Endothelial cell of umbilical vein (primary cell): ENCODE measurements at regions of chr6 and their contacts with region 1.

Region 1: GRCh38 chr6:111873178-111874024 is at the start of gene FYN:
- DNase-seq: peak; percentile 99
- H3K4me3 ChIP-seq: peak within 1 kb of the TSS; percentile 76 to 96 (median 85)
- H3K27ac ChIP-seq: peak within 1 kb of the TSS; percentile 59
- H3K4me1 ChIP-seq: peaks cover 30% of the 10 kb centered on the region
- H3K27me3 ChIP-seq: no peaks in the 10 kb centered on the region
- CTCF ChIP-seq: peak in 1 of 2 donors; percentile 53
- POLR2A ChIP-seq: peak; percentile 62
- total RNA-seq, gene FYN: 143 and 151 TPM in 2 replicates

Region 2: DNA sequence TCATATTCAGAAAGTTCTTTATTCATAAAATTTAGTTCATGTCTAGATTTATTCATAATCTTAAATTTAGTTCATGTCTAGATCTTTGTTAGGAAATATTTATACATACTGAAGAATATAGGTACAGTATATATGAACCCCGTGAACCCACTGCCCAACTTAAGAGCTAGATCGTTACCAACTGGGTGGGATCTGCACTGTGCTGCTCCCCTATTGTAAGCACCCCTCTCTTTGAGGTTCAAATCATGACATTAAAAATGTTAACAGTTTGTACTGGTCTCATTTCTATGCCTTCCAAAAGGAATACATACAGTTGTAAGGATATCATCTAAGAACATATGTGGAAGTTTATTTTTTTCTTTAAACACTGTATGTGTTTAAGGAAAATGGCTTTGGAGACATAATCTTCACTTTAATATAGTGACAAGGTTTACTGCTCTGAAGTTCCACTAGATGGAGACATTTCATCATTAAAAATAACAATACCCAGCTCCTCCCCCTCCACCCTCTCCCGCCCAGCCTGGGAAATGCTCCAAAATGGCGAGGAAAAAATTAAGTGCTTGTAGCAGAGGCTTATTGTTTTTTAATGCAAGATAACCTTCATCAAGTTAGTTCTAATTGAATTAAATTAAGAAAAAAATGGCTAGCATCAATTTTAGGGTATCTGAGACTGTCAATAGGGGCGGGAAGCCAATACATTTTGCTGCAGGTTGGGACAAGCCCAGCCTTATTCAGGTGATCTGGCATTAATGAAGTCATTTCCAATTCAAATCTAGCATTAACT is 163.6 kb before region 1 on chr6:
- CTCF ChIA-PET with region 1: interaction called, 7 read pairs
- POLR2A ChIA-PET with region 1: no interaction called
- dilution Hi-C with region 1: no loop called
- intact Hi-C with region 1: loop called (anchors 1 kb)
- DNase-seq: peak; percentile 84
- H3K4me3 ChIP-seq: no peak overlapping the region
- H3K27ac ChIP-seq: peak overlapping the region; percentile 26
- H3K4me1 ChIP-seq: peaks cover 4% of the 10 kb centered on the region
- H3K27me3 ChIP-seq: no peaks in the 10 kb centered on the region
- CTCF ChIP-seq: peak; percentile 36 to 57
- POLR2A ChIP-seq: no peak

Region 3: GRCh38 chr6:111804627-111805235 is 68.7 kb before region 1 on chr6:
- CTCF ChIA-PET with region 1: interaction called, 5 read pairs
- POLR2A ChIA-PET with region 1: no interaction called
- dilution Hi-C with region 1: no loop called
- intact Hi-C with region 1: loop called (anchors 2 kb)
- DNase-seq: peak; percentile 81
- H3K4me3 ChIP-seq: no peak overlapping the region
- H3K27ac ChIP-seq: peak overlapping the region; percentile 56
- H3K4me1 ChIP-seq: peaks cover 39% of the 10 kb centered on the region
- H3K27me3 ChIP-seq: no peaks in the 10 kb centered on the region
- CTCF ChIP-seq: no peak
- POLR2A ChIP-seq: no peak

Region 4: DNA sequence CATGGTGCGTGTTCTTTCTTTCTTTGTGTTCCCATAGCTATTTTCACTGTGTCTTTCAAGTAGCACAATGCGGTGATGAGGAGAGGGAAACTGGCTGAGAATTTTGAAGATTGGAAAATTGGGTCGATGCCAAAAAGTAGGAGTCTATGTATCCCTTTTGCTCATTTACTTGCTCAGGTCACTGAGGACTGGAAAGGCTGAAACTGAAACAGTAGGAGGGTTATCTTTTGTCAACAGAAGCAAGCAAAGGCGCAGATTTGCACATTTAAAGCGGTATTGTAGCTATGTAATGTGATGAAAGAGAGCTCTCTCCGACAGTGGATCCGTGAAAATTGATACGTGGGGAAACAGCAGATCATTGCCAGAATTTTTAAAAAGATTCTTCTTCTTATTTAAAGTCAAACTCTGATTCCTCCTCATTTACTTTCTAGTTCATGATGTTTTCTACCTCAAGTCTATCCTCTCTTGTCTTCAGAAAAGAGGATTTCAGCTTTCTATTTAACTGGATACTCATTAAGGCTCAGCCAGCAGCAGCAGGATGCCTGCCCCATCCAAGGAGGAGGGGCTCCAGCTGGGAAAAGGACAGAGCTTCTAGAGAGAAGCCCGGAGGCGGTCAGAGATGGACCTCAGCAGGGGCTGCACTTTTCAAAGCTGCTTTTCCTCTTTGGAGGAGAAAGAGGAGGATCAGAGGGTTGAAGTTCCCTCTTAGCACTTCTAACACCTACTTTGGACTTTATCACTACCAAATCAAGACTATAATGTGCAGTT is 15.7 kb after region 1 on chr6:
- CTCF ChIA-PET with region 1: interaction called, 12 read pairs
- POLR2A ChIA-PET with region 1: no interaction called
- dilution Hi-C with region 1: no loop called
- intact Hi-C with region 1: loop called (anchors 2 kb)
- DNase-seq: peak; percentile 71
- H3K4me3 ChIP-seq: peak overlapping the region in 1 of 3 experiments; percentile 31
- H3K27ac ChIP-seq: no peak overlapping the region
- H3K4me1 ChIP-seq: peaks cover 24% of the 10 kb centered on the region
- H3K27me3 ChIP-seq: no peaks in the 10 kb centered on the region
- CTCF ChIP-seq: no peak
- POLR2A ChIP-seq: no peak

Region 5: DNA sequence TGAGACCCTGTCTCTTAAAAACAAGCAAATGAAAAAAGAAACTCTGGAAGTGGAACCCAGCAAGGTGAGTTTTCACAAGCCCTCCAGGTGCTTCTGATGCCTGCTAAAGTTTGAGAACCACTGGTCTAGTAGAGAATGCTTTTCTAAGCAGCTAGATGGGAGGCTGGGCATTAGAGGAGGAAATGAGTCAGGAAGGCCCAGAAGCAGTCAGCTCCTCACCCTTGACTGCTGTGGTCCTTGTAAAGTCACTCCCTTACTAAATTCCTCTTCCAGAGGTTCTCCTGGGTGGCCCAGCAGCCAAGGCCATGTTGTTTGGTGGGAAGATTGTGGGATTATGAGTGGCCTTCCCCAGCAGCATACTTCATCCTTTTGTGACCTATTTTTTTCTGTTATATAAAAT is 51.9 kb after region 1 on chr6:
- CTCF ChIA-PET with region 1: interaction called, 3 read pairs
- POLR2A ChIA-PET with region 1: no interaction called
- dilution Hi-C with region 1: no loop called
- intact Hi-C with region 1: loop called (anchors 2 kb)
- DNase-seq: peak; percentile 59
- H3K4me3 ChIP-seq: no peak overlapping the region
- H3K27ac ChIP-seq: no peak overlapping the region
- H3K4me1 ChIP-seq: peaks cover 7% of the 10 kb centered on the region
- H3K27me3 ChIP-seq: no peaks in the 10 kb centered on the region
- CTCF ChIP-seq: no peak
- POLR2A ChIP-seq: no peak

Region 6: GRCh38 chr6:111997078-111997852 is 123.9 kb after region 1 on chr6:
- CTCF ChIA-PET with region 1: interaction called, 4 read pairs
- POLR2A ChIA-PET with region 1: no interaction called
- dilution Hi-C with region 1: no loop called
- intact Hi-C with region 1: loop called (anchors 1 kb)
- DNase-seq: peak; percentile 74
- H3K4me3 ChIP-seq: no peak overlapping the region
- H3K27ac ChIP-seq: no peak overlapping the region
- H3K4me1 ChIP-seq: peaks cover 14% of the 10 kb centered on the region
- H3K27me3 ChIP-seq: no peaks in the 10 kb centered on the region
- CTCF ChIP-seq: peak; percentile 88
- POLR2A ChIP-seq: no peak